MCF 10A (cell line): ENCODE measurements at regions of chr10 and their contacts with region 1.

Region 1: DNA sequence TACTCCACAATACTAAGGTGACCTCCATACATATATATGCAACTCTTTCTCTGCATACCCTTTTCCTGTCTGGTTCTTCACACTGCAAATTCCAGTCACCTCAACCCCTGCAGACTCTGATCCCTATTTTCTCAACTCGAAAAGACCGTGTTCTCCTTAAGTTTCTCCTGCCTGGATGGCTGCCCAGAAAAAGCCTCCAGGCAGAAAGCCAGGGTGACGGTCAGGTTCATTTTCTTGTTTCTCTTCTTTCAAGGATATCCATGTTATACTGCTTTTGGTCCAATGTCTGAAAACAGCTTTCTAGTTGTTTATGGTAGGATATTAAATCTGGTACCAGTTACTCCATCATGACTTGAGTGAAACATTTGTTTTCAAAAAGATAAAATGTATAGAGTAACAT is 267.8 kb upstream of the MYO3A start:
- DNase-seq: peak; percentile 3
- H3K4me3 Mint-ChIP-seq: no peak overlapping the region
- H3K27ac Mint-ChIP-seq: no peak overlapping the region
- H3K4me1 Mint-ChIP-seq: no peaks in the 10 kb centered on the region
- H3K27me3 Mint-ChIP-seq: peaks cover 85% of the 10 kb centered on the region
- CTCF ChIP-seq: no peak

Region 2: DNA sequence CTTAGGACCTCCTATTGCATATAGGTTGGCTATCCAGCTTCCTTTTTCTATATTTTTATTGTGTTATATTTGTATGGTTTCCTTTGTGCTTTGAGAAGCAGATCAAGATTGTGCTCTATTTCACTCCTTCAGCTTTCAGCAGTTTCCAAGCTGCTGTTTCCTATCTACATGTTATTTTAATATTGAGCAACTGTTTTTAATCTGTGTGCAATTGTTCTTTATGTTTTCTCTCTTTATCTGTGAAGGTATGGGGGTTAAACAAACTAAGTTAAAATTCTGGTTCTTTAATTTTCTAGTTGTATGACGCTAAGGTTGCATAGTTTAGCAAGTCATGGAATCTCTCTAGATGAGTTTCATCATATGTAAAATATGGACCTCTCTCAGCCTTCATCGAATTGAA is 240.5 kb before region 1 on chr10:
- CTCF ChIA-PET with region 1: no interaction called
- POLR2A ChIA-PET with region 1: no interaction called
- intact Hi-C with region 1: no loop called
- DNase-seq: no peak
- H3K4me3 Mint-ChIP-seq: no peak overlapping the region
- H3K27ac Mint-ChIP-seq: no peak overlapping the region
- H3K4me1 Mint-ChIP-seq: no peaks in the 10 kb centered on the region
- H3K27me3 Mint-ChIP-seq: peaks cover 27% of the 10 kb centered on the region
- CTCF ChIP-seq: no peak

Region 3: DNA sequence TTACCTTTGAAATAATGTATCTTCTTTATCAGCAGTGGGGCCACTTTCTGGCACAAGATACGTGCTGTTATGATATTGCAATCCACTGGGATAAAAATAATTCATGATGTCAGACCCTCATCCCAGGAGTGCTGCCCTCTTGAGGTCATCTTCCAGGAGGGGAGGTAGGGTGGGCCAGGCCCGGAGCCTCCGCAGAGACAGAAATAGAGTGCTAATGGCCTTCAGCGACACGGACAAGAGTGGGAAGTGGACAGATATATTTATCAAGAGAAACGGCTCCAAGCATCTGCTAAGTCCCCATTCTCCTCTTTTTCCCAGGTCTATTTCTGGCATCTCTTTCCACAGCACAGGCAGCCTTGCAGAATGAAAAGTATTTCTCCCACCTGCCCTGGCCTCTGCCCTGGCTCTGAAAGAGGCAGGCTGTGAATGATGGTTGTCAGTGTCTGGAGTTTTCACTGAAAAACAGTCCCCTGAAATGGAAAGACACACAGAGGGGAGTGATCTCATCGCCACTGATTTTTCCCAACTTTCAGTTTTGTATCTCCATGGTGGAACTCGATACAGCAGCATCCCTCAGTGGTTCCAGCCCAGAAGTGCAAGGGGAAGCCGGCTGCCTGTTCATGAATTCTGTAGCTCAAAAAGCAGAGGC is 16.1 kb after region 1 on chr10:
- CTCF ChIA-PET with region 1: interaction called, 3 read pairs
- POLR2A ChIA-PET with region 1: interaction called, 3 read pairs
- intact Hi-C with region 1: loop called (anchors 2 kb)
- DNase-seq: peak; percentile 25
- H3K4me3 Mint-ChIP-seq: peak overlapping the region; percentile 55
- H3K27ac Mint-ChIP-seq: no peak overlapping the region
- H3K4me1 Mint-ChIP-seq: peaks cover 11% of the 10 kb centered on the region
- H3K27me3 Mint-ChIP-seq: peaks cover 28% of the 10 kb centered on the region
- CTCF ChIP-seq: peak; percentile 36